PC-3 (cell line): ENCODE measurements at regions of chr1 and their contacts with region 1.

Region 1: DNA sequence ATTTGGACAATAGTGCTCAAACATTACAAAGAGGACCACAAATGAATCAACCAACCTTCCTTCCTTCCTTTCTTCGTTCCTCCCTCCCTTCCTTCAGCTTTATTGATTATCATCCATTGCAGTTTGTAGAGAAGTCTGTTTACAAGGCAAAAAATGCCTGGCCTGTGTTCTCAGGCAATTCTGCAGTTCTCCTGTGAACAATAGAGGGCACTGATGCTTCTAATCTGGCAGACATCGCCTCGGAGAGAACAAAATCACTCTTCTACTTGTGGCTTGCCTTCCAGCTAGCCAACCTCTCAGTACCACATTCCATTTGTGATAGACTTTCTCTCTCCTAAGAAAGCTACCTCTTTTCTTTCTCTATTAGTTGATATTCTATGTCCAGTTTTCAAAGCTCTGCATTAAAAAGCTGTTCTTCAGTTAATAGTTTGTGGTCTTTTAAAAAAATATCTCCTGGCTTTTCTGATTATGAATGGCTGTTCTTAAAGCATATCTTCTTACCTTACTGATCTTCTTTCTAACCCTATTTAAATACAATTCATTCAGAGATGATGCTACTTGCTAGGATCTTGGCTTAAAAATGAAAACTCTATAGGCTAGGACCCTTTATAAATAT is 26.9 kb upstream of the ESRRG start:
- DNase-seq: peak; percentile 85
- ATAC-seq: peak; percentile 98
- H3K4me3 ChIP-seq: no peak overlapping the region
- H3K27ac ChIP-seq: no peak overlapping the region
- H3K4me1 ChIP-seq: no peaks in the 10 kb centered on the region
- H3K27me3 ChIP-seq: peaks cover 22% of the 10 kb centered on the region; the same call in 1 of the 2 replicates
- CTCF ChIP-seq: peak; percentile 95

Region 2: GRCh38 chr1:216902669-216903381 is 152.7 kb after region 1 on chr1:
- CTCF ChIA-PET with region 1: no interaction called
- POLR2A ChIA-PET with region 1: no interaction called
- intact Hi-C with region 1: loop called (anchors 1 kb)
- DNase-seq: peak; percentile 84
- ATAC-seq: peak; percentile 82
- H3K4me3 ChIP-seq: no peak overlapping the region
- H3K27ac ChIP-seq: peak overlapping the region; percentile 41
- H3K4me1 ChIP-seq: peaks cover 19% of the 10 kb centered on the region
- H3K27me3 ChIP-seq: no peaks in the 10 kb centered on the region
- CTCF ChIP-seq: no peak

Region 3: GRCh38 chr1:217089361-217090014 is 339.4 kb after region 1 on chr1:
- CTCF ChIA-PET with region 1: no interaction called
- POLR2A ChIA-PET with region 1: no interaction called
- intact Hi-C with region 1: loop called (anchors 1 kb)
- DNase-seq: peak; percentile 82
- ATAC-seq: peak; percentile 90
- H3K4me3 ChIP-seq: peak overlapping the region; percentile 84
- H3K27ac ChIP-seq: peak overlapping the region; percentile 54
- H3K4me1 ChIP-seq: peaks cover 17% of the 10 kb centered on the region
- H3K27me3 ChIP-seq: no peaks in the 10 kb centered on the region
- CTCF ChIP-seq: no peak

Region 4: GRCh38 chr1:217211486-217211885 is 461.4 kb after region 1 on chr1:
- CTCF ChIA-PET with region 1: no interaction called
- POLR2A ChIA-PET with region 1: no interaction called
- intact Hi-C with region 1: no loop called
- DNase-seq: no peak
- ATAC-seq: no peak
- H3K4me3 ChIP-seq: no peak overlapping the region
- H3K27ac ChIP-seq: no peak overlapping the region
- H3K4me1 ChIP-seq: no peaks in the 10 kb centered on the region
- H3K27me3 ChIP-seq: no peaks in the 10 kb centered on the region
- CTCF ChIP-seq: no peak

Region 5: DNA sequence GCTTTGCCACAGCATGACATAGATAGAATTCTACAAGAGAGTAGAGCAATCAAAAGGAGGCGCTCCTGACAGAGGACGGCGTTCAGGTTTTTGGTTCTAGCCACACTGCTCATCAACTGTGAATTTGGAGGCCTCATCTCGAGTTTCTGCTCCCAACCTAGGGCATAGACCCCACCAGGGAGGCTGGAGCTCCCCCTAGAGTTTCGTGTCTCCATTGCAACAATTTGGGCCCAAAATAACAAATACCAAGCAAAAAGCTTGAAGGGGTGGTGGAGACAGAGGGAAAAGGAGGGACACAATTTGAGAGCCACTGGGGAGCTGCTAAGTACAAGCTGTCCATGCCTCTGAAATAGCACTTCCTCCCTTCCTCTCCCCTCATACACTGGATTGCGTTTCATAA is 583.8 kb after region 1 on chr1:
- CTCF ChIA-PET with region 1: interaction called, 3 read pairs
- POLR2A ChIA-PET with region 1: no interaction called
- intact Hi-C with region 1: loop called (anchors 1 kb)
- DNase-seq: peak; percentile 89
- ATAC-seq: peak; percentile 77
- H3K4me3 ChIP-seq: no peak overlapping the region
- H3K27ac ChIP-seq: no peak overlapping the region
- H3K4me1 ChIP-seq: no peaks in the 10 kb centered on the region
- H3K27me3 ChIP-seq: peaks cover 5% of the 10 kb centered on the region; the same call in 1 of the 2 replicates
- CTCF ChIP-seq: peak; percentile 98

Region 6: GRCh38 chr1:217522281-217522680 is 772.2 kb after region 1 on chr1:
- CTCF ChIA-PET with region 1: no interaction called
- POLR2A ChIA-PET with region 1: no interaction called
- intact Hi-C with region 1: loop called (anchors 2 kb)
- DNase-seq: peak; percentile 32
- ATAC-seq: peak; percentile 37; the same call in 1 of the 2 replicates
- H3K4me3 ChIP-seq: no peak overlapping the region
- H3K27ac ChIP-seq: no peak overlapping the region
- H3K4me1 ChIP-seq: peaks cover 35% of the 10 kb centered on the region
- H3K27me3 ChIP-seq: no peaks in the 10 kb centered on the region
- CTCF ChIP-seq: peak; percentile 64

Region 7: GRCh38 chr1:217660353-217661062 is 910.4 kb after region 1 on chr1:
- CTCF ChIA-PET with region 1: interaction called, 8 read pairs
- POLR2A ChIA-PET with region 1: no interaction called
- intact Hi-C with region 1: loop called (anchors 2 kb)
- DNase-seq: peak; percentile 98
- ATAC-seq: peak; percentile 93
- H3K4me3 ChIP-seq: peak overlapping the region; percentile 48; the same call in 1 of the 2 replicates
- H3K27ac ChIP-seq: peak overlapping the region; percentile 86
- H3K4me1 ChIP-seq: peaks cover 24% of the 10 kb centered on the region
- H3K27me3 ChIP-seq: no peaks in the 10 kb centered on the region
- CTCF ChIP-seq: peak; percentile 83

Region 8: GRCh38 chr1:218171285-218171893 is 1421.3 kb after region 1 on chr1:
- CTCF ChIA-PET with region 1: no interaction called
- POLR2A ChIA-PET with region 1: no interaction called
- intact Hi-C with region 1: loop called (anchors 2 kb)
- DNase-seq: peak; percentile 87
- ATAC-seq: peak; percentile 57
- H3K4me3 ChIP-seq: no peak overlapping the region
- H3K27ac ChIP-seq: no peak overlapping the region
- H3K4me1 ChIP-seq: no peaks in the 10 kb centered on the region
- H3K27me3 ChIP-seq: peaks cover 35% of the 10 kb centered on the region
- CTCF ChIP-seq: peak; percentile 99